Panc1 (cell line): ENCODE measurements at regions of chr9 and their contacts with region 1.

Region 1: DNA sequence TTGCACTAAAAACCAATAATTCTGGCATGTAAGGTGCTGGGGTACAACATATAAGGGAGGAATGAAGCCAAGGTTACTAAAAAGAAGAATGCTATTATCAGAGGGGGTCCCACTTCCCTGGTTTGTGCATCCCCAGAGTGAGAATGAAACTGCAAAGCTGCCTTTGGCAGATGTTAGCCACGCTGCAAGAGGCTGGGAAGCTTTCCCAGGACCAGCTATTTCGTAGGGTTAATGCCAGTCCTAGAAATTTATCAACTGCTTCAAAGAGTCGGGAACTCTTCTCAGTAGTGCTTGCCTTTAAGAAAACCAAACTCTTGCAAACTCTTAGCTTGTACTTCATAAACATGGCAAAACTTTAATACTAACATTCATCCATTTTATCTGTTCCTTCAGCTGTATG is 87.5 kb upstream of the NR5A1 start:
- DNase-seq: no peak
- ATAC-seq: no peak
- H3K4me3 ChIP-seq: no peak overlapping the region
- H3K27ac ChIP-seq: no peak overlapping the region
- H3K4me1 ChIP-seq: peaks cover 38% of the 10 kb centered on the region
- H3K27me3 ChIP-seq: no peaks in the 10 kb centered on the region
- CTCF ChIP-seq: no peak

Region 2: DNA sequence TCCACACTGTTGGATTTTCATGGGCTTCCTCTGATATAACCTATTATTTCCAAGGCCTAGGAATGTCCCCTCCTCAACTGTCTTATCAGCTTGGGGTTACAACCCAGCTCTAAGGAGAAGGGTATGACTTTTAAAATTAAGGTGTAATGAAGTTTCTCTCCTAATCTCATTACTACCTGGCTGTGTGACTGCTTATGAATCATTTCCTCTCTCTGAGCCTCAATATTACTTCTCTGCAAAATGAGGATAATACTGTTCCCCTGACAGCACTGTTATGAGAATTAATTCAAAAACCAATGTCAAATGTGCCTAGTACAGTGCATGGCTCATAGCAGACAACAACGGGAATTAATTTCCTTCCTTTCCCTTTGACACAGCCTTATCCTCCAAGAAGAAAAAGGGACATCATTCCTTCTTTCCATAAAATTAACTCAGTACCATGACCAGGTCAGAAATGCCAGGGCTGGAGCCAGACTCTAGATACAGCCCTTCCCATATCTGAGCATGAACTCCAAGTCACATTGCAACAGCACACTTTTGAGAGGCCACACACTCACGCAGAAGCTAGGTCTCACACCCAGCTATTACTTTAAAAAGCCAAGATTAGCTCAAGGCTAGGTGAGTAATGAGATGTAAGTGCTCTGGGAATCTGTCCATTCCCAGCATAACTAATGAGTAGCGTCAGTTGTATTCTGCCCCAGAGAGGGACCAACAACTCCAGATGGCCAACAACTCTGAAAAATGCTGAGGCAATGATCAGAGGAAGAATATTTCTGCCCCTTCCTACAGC is 57.7 kb after region 1 on chr9:
- CTCF ChIA-PET with region 1: no interaction called
- POLR2A ChIA-PET with region 1: no interaction called
- in situ Hi-C with region 1: no loop called
- intact Hi-C with region 1: no loop called
- DNase-seq: no peak
- ATAC-seq: peak; percentile 90
- H3K4me3 ChIP-seq: no peak overlapping the region
- H3K27ac ChIP-seq: peak overlapping the region; percentile 13; the same call in 1 of the 2 replicates
- H3K4me1 ChIP-seq: peaks cover 18% of the 10 kb centered on the region
- H3K27me3 ChIP-seq: no peaks in the 10 kb centered on the region
- CTCF ChIP-seq: no peak

Region 3: GRCh38 chr9:124759327-124759726 is 164.7 kb after region 1 on chr9:
- CTCF ChIA-PET with region 1: no interaction called
- POLR2A ChIA-PET with region 1: interaction called, 11 read pairs
- in situ Hi-C with region 1: no loop called
- intact Hi-C with region 1: no loop called
- DNase-seq: no peak
- ATAC-seq: no peak
- H3K4me3 ChIP-seq: no peak overlapping the region
- H3K27ac ChIP-seq: peak overlapping the region; percentile 9; the same call in 1 of the 2 replicates
- H3K4me1 ChIP-seq: peaks cover 43% of the 10 kb centered on the region
- H3K27me3 ChIP-seq: no peaks in the 10 kb centered on the region
- CTCF ChIP-seq: no peak